ENCODE measurements at regions of chr1 and their contacts with region 1.

Region 1: GRCh38 chr1:65958561-65959350 is 166.1 kb downstream of the PDE4B start:
- DNase-seq: no peak
- ATAC-seq: peak; percentile 56

Region 2: DNA sequence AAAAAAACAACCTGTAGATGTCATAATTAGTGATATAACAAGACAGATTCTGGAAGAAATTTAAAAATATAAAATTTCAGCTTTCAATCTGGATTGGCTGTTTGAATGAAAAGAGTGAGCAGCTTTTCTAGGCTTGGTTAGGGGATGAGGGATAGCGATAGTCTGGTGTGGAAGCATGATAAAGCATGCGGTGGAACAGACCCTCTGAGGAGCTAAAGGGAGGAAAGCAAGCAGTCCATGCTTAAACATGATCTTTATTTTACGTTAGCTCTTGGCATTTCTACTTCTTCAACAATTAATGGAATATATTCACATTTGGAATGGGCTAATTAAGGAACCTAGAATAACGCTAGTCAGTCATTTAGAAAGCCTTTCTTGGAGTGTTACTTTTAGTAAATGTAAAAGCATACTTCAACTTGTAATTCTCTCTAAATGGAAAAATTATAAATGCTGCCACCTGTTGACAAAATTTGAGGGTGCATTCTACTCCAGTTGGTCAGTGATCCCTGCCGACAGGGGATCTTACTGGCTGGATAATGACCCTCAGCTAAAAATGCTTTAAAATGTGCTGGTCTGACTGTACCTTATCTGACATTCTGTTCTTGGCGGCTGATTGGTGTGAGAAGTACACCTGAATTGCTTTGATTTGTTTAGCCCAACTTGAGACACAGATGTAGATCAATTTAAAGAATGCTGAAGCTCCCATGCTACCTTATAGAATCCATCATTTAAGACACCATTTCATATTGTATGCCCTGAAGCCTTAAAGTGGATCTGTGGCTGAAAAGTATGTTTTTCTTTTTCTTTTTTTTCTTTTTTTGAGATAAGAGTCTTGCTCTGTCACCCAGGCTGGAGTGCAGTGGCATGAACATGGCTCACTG is 749.5 kb before region 1 on chr1:
- intact Hi-C with region 1: no loop called
- DNase-seq: no peak
- ATAC-seq: peak; percentile 80

Region 3: GRCh38 chr1:65911679-65912078 is 47.1 kb before region 1 on chr1:
- intact Hi-C with region 1: no loop called
- DNase-seq: no peak
- ATAC-seq: no peak

Region 4: GRCh38 chr1:65979136-65980044 is 20.6 kb after region 1 on chr1:
- intact Hi-C with region 1: no loop called
- DNase-seq: no peak
- ATAC-seq: peak; percentile 28

Region 5: DNA sequence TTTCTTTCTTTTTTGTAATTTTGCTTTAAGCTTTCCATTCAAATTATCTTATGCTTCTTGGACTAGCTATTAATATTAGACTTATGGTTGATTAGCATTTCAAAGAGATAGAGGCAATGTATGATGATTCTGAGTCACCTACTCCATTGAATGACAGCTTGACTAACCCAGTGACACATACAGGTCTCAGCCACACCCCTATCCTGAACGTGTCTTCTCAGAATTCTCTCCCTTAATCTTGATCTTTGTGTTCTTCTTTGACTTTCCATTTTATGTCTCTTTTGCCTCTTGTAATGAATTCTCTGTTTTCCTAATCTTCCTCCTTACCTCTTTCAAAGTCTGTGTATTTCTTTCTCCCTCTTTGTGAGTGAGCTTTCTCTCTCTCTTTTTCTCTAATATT is 75.0 kb after region 1 on chr1:
- intact Hi-C with region 1: no loop called
- DNase-seq: no peak
- ATAC-seq: no peak

Region 6: DNA sequence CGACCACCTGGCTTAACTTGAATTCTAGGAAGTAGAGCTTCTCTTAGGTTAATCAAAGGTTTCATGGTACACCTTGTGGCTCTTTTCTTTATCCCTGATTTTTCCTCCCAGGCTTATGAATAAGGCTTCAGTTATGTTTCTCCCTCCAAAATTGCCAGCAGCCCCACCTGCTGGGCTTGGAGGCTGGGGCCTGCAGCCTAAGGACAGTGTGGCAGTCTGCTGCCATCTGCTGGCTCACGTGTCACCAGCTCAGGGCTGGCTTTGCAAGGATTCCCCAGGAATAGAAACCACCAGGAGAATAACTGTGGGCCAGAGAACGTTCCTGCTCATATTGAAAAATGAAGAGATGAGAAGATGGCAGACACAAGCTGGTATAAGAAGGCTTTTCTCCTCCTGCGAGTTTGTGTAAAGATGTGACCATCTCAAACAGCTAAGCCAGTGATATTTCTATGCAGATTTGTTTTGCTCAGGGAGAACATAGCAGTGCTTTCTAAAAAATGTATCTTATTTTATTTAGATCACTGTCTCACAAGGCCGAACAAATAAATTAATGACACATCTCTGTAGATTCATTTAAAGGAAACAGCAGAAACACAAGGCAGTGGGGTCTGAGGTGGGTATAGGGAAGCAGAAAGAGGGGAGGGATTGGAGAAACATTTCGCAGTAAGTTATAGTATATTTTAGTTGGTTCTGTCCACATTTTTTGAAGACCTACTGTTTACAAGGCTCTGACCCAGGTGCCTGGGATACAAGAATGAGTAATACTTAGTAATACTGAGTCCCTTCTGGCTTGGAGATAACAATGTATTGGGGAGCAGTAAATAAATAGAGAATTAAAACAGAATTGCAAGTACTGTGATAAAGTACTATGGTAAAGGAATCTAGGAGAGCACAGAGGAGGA is 284.1 kb after region 1 on chr1:
- intact Hi-C with region 1: loop called (anchors 5 kb)
- DNase-seq: peak; percentile 91
- ATAC-seq: peak; percentile 97

Region 7: GRCh38 chr1:66452162-66452561 is 493.4 kb after region 1 on chr1:
- intact Hi-C with region 1: loop called (anchors 10 kb)
- DNase-seq: no peak
- ATAC-seq: no peak

Measured in sciatic nerve (tissue), 2 donors.